CD4-positive, alpha-beta T cell (primary cell): ENCODE measurements at regions of chr2 and their contacts with region 1.

Region 1: DNA sequence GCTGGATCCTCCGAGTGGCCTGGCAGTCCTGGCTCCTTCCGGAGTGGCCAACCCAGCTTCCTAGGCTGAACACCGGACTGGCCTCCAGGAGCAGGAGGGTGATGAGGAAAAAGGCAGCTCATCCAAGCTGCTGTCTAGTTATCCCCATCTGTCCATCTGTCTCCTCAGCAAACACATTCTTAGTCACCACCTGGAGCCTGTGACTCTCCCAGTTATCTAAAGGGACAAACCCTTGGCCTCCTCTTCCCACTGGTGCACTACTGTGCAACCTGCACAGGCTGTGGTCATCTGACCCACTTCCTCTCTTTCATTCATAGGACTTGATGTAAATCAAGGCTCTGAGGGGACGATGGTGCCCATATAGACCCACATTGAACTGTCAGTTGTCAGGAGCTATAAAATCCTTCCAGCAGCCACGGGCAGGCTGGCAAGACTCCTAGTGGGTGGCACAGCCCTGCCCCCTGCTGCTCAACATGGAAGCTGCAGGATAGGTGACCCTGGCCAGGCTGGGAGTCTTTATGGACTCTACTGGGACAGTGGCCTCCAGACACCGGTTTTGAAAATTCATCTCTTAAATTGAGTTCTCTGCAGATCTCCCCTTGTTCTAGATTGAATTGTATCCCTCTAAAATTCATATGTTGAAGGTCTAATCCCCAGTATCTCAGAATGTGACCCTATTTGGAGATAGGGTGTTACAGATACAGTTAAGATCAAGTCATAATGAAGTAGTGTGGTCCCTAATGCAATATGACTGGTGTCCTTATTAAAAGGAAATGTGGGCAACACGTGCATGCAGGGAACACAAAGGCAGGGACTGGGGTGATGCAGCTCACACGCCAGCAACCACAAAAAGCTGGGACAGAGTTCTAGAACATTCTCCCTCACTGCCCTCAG is 29.3 kb upstream of the DUSP2 start:
- DNase-seq: peak; percentile 76 to 90 (median 82)
- ATAC-seq: peak; percentile 100
- H3K4me3 ChIP-seq: no peak overlapping the region
- H3K4me3 Mint-ChIP-seq: no peak overlapping the region
- H3K27ac ChIP-seq: no peak overlapping the region
- H3K27ac Mint-ChIP-seq: no peak overlapping the region
- H3K4me1 ChIP-seq: peaks cover 6% of the 10 kb centered on the region
- H3K4me1 Mint-ChIP-seq: peaks cover 11% of the 10 kb centered on the region
- H3K27me3 ChIP-seq: no peaks in the 10 kb centered on the region
- H3K27me3 Mint-ChIP-seq: no peaks in the 10 kb centered on the region
- CTCF ChIP-seq: peak; percentile 92

Region 2: DNA sequence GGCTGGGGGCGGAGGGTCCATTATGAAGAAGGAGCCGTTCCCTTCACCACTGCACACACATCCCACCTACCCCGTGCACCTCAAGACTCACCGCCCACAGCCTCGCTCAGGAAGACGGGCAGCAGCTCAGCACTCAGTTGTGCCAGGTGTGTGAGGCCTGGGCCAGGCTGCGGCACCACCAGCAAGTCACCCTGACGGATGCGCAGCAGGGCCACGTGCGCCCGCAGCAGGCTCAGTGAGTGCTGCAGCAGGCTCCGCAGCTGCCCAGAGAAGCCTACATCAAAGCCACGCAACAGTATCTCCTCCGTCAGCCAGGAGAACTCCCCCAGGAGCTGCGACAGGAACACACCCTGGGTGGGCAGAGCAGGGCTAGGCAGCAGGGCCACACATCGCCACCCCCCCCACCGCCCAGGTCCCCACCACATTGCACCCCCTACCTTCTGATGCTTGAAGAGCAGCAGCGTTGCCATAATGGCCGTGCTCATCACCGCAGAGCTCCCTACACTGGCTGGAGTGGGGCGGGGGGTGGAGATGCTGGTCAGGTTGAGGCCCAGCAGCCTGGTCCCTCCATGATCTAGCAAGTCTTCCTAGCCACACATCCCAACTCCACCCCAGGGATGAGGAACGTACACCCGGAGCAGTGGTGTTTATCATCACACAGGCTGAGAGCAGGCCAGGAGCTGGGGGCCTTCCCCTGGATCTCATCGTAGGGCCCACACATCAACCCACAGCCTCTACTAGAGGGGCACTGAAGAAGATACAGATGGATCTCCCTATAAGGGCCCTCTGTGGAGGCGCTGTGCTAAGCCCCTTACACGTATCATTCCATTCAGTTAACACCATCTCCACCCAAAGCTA is 149.9 kb before region 1 on chr2:
- CTCF ChIA-PET with region 1: interaction called, 10 read pairs
- POLR2A ChIA-PET with region 1: no interaction called
- intact Hi-C with region 1: loop called (anchors 10 kb)
- DNase-seq: peak in 1 of 14 experiments; percentile 11
- ATAC-seq: no peak
- H3K4me3 ChIP-seq: no peak overlapping the region
- H3K4me3 Mint-ChIP-seq: no peak overlapping the region
- H3K27ac ChIP-seq: no peak overlapping the region
- H3K27ac Mint-ChIP-seq: no peak overlapping the region
- H3K4me1 ChIP-seq: peaks cover 3% of the 10 kb centered on the region
- H3K4me1 Mint-ChIP-seq: peaks cover 3% of the 10 kb centered on the region
- H3K27me3 ChIP-seq: no peaks in the 10 kb centered on the region
- H3K27me3 Mint-ChIP-seq: no peaks in the 10 kb centered on the region
- CTCF ChIP-seq: no peak

Region 3: DNA sequence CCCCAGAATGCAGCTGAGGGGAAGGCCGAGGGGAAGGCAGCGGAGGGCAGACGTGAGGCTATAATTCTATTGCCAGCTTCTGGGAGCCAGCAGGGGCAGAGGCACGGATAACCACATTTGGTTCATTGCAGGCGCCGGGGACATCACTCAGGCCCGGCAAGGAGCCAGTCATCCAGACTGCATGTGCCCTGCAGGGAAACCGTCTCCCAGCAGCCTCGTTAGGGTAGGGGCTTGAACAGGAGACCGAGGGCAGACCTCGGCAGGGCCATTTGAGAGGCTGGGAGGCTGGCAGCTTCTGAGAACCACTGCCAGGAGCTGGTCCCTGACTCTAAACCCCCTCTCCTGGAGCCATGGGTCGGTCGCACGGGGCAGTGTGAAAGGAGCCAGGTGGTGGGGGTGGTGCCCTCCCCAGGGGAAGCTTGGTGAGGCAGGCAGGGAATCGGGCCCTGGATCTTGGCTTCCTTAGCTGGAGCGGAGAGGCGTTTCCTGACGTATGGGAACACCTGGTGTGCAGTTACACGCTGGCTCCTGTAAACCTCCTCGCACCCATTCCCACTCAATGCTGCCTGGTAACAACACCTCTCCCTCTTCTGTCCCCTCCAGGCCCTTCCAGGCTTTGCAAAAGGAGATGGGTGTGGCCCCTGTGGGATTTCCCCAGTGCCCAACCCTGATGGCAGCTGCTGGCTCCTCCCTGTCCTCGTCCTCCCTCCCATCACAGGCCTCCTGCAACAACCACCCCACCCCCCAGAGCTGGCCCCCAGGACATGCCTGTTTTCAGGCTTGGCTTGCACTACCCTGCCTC is 82.8 kb before region 1 on chr2:
- CTCF ChIA-PET with region 1: no interaction called
- POLR2A ChIA-PET with region 1: no interaction called
- intact Hi-C with region 1: no loop called
- DNase-seq: peak in 2 of 14 experiments; percentile 16 to 30
- ATAC-seq: no peak
- H3K4me3 ChIP-seq: no peak overlapping the region
- H3K4me3 Mint-ChIP-seq: no peak overlapping the region
- H3K27ac ChIP-seq: no peak overlapping the region
- H3K27ac Mint-ChIP-seq: no peak overlapping the region
- H3K4me1 ChIP-seq: no peaks in the 10 kb centered on the region
- H3K4me1 Mint-ChIP-seq: no peaks in the 10 kb centered on the region
- H3K27me3 ChIP-seq: no peaks in the 10 kb centered on the region
- H3K27me3 Mint-ChIP-seq: no peaks in the 10 kb centered on the region
- CTCF ChIP-seq: no peak

Region 4: GRCh38 chr2:96104487-96104861 is 70.0 kb before region 1 on chr2:
- CTCF ChIA-PET with region 1: no interaction called
- POLR2A ChIA-PET with region 1: no interaction called
- intact Hi-C with region 1: no loop called
- DNase-seq: peak in 1 of 14 experiments; percentile 16
- ATAC-seq: no peak
- H3K4me3 ChIP-seq: no peak overlapping the region
- H3K4me3 Mint-ChIP-seq: no peak overlapping the region
- H3K27ac ChIP-seq: no peak overlapping the region
- H3K27ac Mint-ChIP-seq: no peak overlapping the region
- H3K4me1 ChIP-seq: no peaks in the 10 kb centered on the region
- H3K4me1 Mint-ChIP-seq: no peaks in the 10 kb centered on the region
- H3K27me3 ChIP-seq: peaks cover 0 to 2% of the 10 kb centered on the region in 2 experiments
- H3K27me3 Mint-ChIP-seq: no peaks in the 10 kb centered on the region
- CTCF ChIP-seq: no peak

Region 5: DNA sequence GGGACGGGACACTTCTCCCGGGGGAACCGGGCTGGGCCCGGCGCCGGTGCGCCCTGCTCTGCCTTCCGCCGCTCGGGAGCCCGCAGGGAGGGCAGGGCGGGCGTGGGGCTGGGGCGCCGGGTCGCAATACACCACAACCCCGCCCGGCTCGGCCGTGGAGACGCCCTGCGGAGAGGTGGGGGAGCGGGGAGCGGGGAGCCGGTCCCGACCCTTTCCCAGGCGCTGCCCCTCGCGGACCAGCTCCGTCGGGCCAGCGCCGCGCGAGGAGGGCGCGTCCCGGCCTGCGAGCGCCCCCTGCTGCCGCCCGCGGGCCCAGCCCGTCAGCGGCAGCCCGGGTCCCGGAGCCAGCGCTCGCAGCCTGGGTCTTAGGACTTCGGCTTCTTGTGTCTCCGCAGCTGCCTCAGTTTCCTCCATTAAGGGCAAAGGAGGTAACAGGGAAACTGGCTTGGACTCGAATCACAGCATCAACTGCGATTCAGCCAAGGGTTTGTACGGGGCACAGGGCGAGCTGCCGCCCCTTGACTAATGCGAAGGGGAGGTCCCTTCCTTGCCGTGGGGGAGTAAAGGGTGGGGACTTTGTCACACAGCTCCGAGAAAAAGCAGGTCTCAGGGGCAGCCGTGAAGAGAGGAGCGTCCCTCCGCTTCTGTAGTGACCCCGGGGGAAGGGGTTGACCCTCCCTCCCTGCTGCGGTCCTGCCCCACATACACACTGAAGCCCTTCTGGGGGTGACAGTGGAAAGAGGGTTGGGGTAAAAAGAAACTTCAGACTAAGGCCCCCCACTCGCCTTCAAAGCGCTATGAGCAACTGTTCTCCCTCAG is 57.4 kb before region 1 on chr2:
- CTCF ChIA-PET with region 1: interaction called, 35 read pairs
- POLR2A ChIA-PET with region 1: no interaction called
- intact Hi-C with region 1: no loop called
- DNase-seq: peak in 13 of 14 experiments; percentile 37 to 86 (median 55)
- ATAC-seq: peak; percentile 75
- H3K4me3 ChIP-seq: peak overlapping the region; percentile 21
- H3K4me3 Mint-ChIP-seq: peak overlapping the region; percentile 77
- H3K27ac ChIP-seq: no peak overlapping the region
- H3K27ac Mint-ChIP-seq: no peak overlapping the region
- H3K4me1 ChIP-seq: peaks cover 18% of the 10 kb centered on the region
- H3K4me1 Mint-ChIP-seq: peaks cover 10% of the 10 kb centered on the region
- H3K27me3 ChIP-seq: peaks cover 15 to 22% of the 10 kb centered on the region in 2 experiments
- H3K27me3 Mint-ChIP-seq: peaks cover 31% of the 10 kb centered on the region
- CTCF ChIP-seq: peak; percentile 61

Region 6: DNA sequence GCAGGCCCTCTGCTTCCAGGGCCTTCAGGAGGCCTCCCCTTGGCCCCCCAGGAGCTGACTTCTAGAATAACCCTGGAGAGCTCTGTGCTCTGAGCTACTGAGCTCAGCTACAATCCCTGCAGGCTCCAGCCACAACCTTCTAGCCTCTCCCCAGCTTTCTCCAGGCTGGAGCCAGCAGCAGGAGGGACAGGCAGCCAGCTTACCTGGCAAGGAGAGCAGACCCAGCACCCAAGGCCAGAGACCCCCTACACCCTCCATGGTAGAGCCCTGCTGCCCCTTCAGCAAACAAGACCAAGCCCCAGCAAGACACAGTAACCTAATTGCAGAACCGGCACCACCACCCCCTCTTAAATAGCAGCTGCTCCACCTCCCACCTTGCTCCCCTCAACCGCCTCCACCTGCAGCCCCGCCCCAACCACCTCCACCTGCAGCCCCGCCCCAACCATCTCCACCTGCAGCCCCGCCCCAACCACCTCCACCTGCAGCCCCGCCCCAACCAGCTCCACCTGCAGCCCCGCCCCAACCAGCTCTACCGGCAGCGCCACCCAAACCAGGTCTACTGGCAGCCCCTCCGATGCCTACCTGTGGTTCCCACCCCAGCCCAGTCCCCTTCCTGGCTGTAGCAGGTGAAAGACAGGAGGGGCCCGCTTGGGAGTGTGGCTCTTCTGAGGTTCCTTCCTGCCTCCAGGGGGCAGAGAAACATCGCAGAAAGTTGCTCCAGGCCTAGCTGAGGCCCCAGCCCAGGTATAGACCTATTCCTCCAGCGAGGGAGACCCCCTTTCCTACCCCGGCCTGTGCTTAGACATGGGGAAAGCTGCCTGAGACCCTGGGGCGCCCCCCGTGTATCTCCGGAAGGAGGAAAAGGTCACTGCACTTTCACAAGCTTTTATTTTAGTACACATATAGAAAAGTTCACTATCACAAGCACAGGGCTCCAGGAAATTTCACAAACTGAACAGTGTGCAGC is 36.0 kb before region 1 on chr2 and contains the start of gene ASTL:
- CTCF ChIA-PET with region 1: interaction called, 229 read pairs
- POLR2A ChIA-PET with region 1: interaction called, 199 read pairs
- intact Hi-C with region 1: loop called (anchors 1 kb)
- DNase-seq: peak; percentile 57 to 86 (median 64)
- ATAC-seq: peak; percentile 42
- H3K4me3 ChIP-seq: no peak within 1 kb of the TSS
- H3K4me3 Mint-ChIP-seq: peak within 1 kb of the TSS; percentile 39
- H3K27ac ChIP-seq: no peak within 1 kb of the TSS
- H3K27ac Mint-ChIP-seq: peak within 1 kb of the TSS; percentile 71
- H3K4me1 ChIP-seq: peaks cover 27% of the 10 kb centered on the region
- H3K4me1 Mint-ChIP-seq: peaks cover 32% of the 10 kb centered on the region
- H3K27me3 ChIP-seq: no peaks in the 10 kb centered on the region
- H3K27me3 Mint-ChIP-seq: no peaks in the 10 kb centered on the region
- CTCF ChIP-seq: peak; percentile 75
- total RNA-seq, gene ASTL: 5.0 to 6.5 TPM

Region 7: GRCh38 chr2:96157651-96158553 is 16.6 kb before region 1 on chr2:
- CTCF ChIA-PET with region 1: interaction called, 13 read pairs
- POLR2A ChIA-PET with region 1: interaction called, 6 read pairs
- intact Hi-C with region 1: no loop called
- DNase-seq: peak; percentile 36 to 89 (median 74)
- ATAC-seq: peak; percentile 92
- H3K4me3 ChIP-seq: peak overlapping the region; percentile 12
- H3K4me3 Mint-ChIP-seq: peak overlapping the region; percentile 60
- H3K27ac ChIP-seq: peak overlapping the region in 1 of 2 donors; percentile 34
- H3K27ac Mint-ChIP-seq: peak overlapping the region; percentile 72
- H3K4me1 ChIP-seq: peaks cover 73% of the 10 kb centered on the region
- H3K4me1 Mint-ChIP-seq: peaks cover 79% of the 10 kb centered on the region
- H3K27me3 ChIP-seq: no peaks in the 10 kb centered on the region
- H3K27me3 Mint-ChIP-seq: no peaks in the 10 kb centered on the region
- CTCF ChIP-seq: no peak

Region 8: GRCh38 chr2:96407041-96407918 is 232.8 kb after region 1 on chr2:
- CTCF ChIA-PET with region 1: no interaction called
- POLR2A ChIA-PET with region 1: no interaction called
- intact Hi-C with region 1: no loop called
- DNase-seq: peak; percentile 58 to 91 (median 76)
- ATAC-seq: peak; percentile 93
- H3K4me3 ChIP-seq: no peak overlapping the region
- H3K4me3 Mint-ChIP-seq: peak overlapping the region; percentile 79
- H3K27ac ChIP-seq: peak overlapping the region; percentile 33 to 35
- H3K27ac Mint-ChIP-seq: peak overlapping the region; percentile 84
- H3K4me1 ChIP-seq: peaks cover 38% of the 10 kb centered on the region
- H3K4me1 Mint-ChIP-seq: peaks cover 41% of the 10 kb centered on the region
- H3K27me3 ChIP-seq: no peaks in the 10 kb centered on the region
- H3K27me3 Mint-ChIP-seq: no peaks in the 10 kb centered on the region
- CTCF ChIP-seq: peak; percentile 74